Caco-2 (cell line): ENCODE measurements at regions of chr20 and their contacts with region 1.

Region 1: DNA sequence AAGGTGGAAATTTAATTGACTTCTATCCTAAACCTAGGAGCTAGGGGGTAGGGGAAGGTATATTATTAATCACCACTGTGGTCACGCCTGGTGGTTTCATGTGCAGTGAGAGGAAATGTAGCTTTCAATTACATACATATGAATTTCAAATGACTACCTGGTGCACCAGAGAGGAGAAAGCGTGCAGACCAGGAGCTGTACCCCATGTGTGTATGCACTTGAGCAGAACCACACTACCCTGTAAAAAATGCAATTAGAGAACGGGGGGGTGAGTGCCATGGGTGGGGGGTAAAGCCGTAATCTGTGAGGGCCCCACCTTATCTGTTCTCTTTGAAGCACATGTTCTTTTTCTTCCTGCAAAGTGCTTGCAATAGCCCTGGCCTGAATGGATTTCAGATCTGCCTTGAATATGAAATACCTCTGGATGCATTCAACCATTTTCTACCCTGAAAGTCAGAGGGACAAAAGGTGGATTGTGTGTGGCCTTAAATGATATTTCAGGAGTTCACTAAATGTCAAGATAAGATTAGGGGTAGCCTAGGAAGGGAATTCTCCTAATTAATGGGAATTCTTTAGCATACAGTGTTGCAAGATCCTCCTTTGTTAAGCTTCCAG is 30.9 kb upstream of the EDN3 start:
- DNase-seq: no peak
- H3K4me3 ChIP-seq: no peak overlapping the region
- H3K4me3 Mint-ChIP-seq: no peak overlapping the region
- H3K27ac Mint-ChIP-seq: no peak overlapping the region
- H3K4me1 ChIP-seq: peaks cover 13% of the 10 kb centered on the region; the same call in 1 of the 2 replicates
- H3K4me1 Mint-ChIP-seq: peaks cover 9% of the 10 kb centered on the region
- H3K27me3 ChIP-seq: no peaks in the 10 kb centered on the region
- H3K27me3 Mint-ChIP-seq: peaks cover 13% of the 10 kb centered on the region
- CTCF ChIP-seq: no peak

Region 2: DNA sequence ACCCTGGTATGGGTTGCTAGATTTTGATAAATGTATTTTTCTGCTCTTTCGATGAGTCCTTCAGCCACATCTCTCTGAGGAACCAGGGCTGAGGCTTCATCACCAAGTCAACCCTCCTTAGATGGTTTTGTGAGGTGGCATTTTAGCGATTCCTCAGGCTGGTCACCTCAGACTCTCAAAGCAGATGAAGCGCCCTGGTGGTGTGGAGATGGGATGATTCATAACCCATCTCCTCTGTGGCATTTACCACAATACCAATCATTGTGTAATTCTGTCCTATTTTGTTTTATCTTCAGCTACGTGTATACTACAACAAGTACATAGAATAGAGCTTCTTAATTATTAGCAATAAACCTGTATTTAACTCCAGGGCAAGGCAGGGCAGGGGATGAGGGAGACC is 26.8 kb before region 1 on chr20:
- CTCF ChIA-PET with region 1: no interaction called
- POLR2A ChIA-PET with region 1: no interaction called
- intact Hi-C with region 1: loop called (anchors 1 kb)
- DNase-seq: no peak
- H3K4me3 ChIP-seq: no peak overlapping the region
- H3K4me3 Mint-ChIP-seq: peak overlapping the region; percentile 50
- H3K27ac Mint-ChIP-seq: peak overlapping the region; percentile 56
- H3K4me1 ChIP-seq: peaks cover 39% of the 10 kb centered on the region
- H3K4me1 Mint-ChIP-seq: peaks cover 39% of the 10 kb centered on the region
- H3K27me3 ChIP-seq: no peaks in the 10 kb centered on the region
- H3K27me3 Mint-ChIP-seq: peaks cover 3% of the 10 kb centered on the region
- CTCF ChIP-seq: peak in 1 of 2 experiments; percentile 27